HCT116 (cell line): ENCODE measurements at regions of chr19 and their contacts with region 1.

Region 1: DNA sequence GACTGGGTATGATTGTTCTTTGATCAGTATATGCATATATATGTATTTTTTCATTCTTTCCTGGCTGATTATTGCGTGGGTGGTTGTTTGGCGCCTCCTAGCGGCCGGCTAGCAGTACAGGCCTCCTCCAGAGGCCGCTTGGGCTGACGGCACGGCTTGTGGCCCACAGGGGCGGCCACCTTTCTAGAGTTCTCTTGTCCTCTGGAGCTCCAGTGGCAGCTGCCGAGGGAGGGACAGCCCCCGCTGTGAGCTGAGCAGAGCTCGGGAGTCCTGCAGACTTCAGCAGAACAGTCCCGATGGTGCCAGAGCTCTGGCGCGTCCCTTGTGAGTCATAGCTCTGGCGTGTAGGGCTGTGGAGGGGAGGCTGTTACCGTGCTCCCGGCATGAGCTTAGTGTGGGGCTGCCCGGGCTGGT is 22.5 kb upstream of the ZNF429 start:
- DNase-seq: peak; percentile 7
- ATAC-seq: peak; percentile 63
- H3K4me3 ChIP-seq: no peak overlapping the region
- H3K27ac ChIP-seq: no peak overlapping the region
- H3K4me1 ChIP-seq: no peaks in the 10 kb centered on the region
- H3K27me3 ChIP-seq: no peaks in the 10 kb centered on the region
- CTCF ChIP-seq: peak; percentile 9 to 64 (median 53); a peak in 4 of 6 replicates
- POLR2A ChIP-seq: no peak
- RAD21 ChIP-seq: peak; percentile 38; the same call in 1 of the 2 replicates

Region 2: GRCh38 chr19:20999731-21000352 is 483.0 kb before region 1 on chr19:
- CTCF ChIA-PET with region 1: no interaction called
- POLR2A ChIA-PET with region 1: no interaction called
- RAD21 ChIA-PET with region 1: no interaction called
- intact Hi-C with region 1: loop called (anchors 5 kb)
- DNase-seq: no peak
- ATAC-seq: no peak
- H3K4me3 ChIP-seq: no peak overlapping the region
- H3K27ac ChIP-seq: no peak overlapping the region
- H3K4me1 ChIP-seq: no peaks in the 10 kb centered on the region
- H3K27me3 ChIP-seq: no peaks in the 10 kb centered on the region
- CTCF ChIP-seq: no peak
- POLR2A ChIP-seq: no peak
- RAD21 ChIP-seq: no peak

Region 3: GRCh38 chr19:21109116-21109515 is 373.8 kb before region 1 on chr19:
- CTCF ChIA-PET with region 1: no interaction called
- POLR2A ChIA-PET with region 1: no interaction called
- RAD21 ChIA-PET with region 1: no interaction called
- intact Hi-C with region 1: no loop called
- DNase-seq: no peak
- ATAC-seq: no peak
- H3K4me3 ChIP-seq: no peak overlapping the region
- H3K27ac ChIP-seq: no peak overlapping the region
- H3K4me1 ChIP-seq: no peaks in the 10 kb centered on the region
- H3K27me3 ChIP-seq: no peaks in the 10 kb centered on the region
- CTCF ChIP-seq: no peak
- POLR2A ChIP-seq: no peak
- RAD21 ChIP-seq: no peak

Region 4: GRCh38 chr19:21202865-21203494 is 279.9 kb before region 1 on chr19:
- CTCF ChIA-PET with region 1: no interaction called
- POLR2A ChIA-PET with region 1: no interaction called
- RAD21 ChIA-PET with region 1: no interaction called
- intact Hi-C with region 1: loop called (anchors 2 kb)
- DNase-seq: peak; percentile 32
- ATAC-seq: peak; percentile 74
- H3K4me3 ChIP-seq: no peak overlapping the region
- H3K27ac ChIP-seq: no peak overlapping the region
- H3K4me1 ChIP-seq: no peaks in the 10 kb centered on the region
- H3K27me3 ChIP-seq: no peaks in the 10 kb centered on the region
- CTCF ChIP-seq: peak; percentile 18 to 82 (median 78); a peak in 4 of 6 replicates
- POLR2A ChIP-seq: no peak
- RAD21 ChIP-seq: peak; percentile 58

Region 5: GRCh38 chr19:21468791-21469190 is 14.1 kb before region 1 on chr19:
- CTCF ChIA-PET with region 1: no interaction called
- POLR2A ChIA-PET with region 1: no interaction called
- RAD21 ChIA-PET with region 1: no interaction called
- intact Hi-C with region 1: no loop called
- DNase-seq: no peak
- ATAC-seq: no peak
- H3K4me3 ChIP-seq: no peak overlapping the region
- H3K27ac ChIP-seq: no peak overlapping the region
- H3K4me1 ChIP-seq: no peaks in the 10 kb centered on the region
- H3K27me3 ChIP-seq: no peaks in the 10 kb centered on the region
- CTCF ChIP-seq: no peak
- POLR2A ChIP-seq: no peak
- RAD21 ChIP-seq: no peak